Endothelial cell of umbilical vein (primary cell): ENCODE measurements at regions of chr16 and their contacts with region 1.

Region 1: GRCh38 chr16:85768199-85768598 is 17.3 kb upstream of the C16orf74 start:
- DNase-seq: no peak
- H3K4me3 ChIP-seq: no peak overlapping the region
- H3K27ac ChIP-seq: peak overlapping the region; percentile 5
- H3K4me1 ChIP-seq: peaks cover 9% of the 10 kb centered on the region
- H3K27me3 ChIP-seq: no peaks in the 10 kb centered on the region
- CTCF ChIP-seq: no peak
- POLR2A ChIP-seq: no peak

Region 2: GRCh38 chr16:86653285-86654006 is 885.2 kb after region 1 on chr16:
- CTCF ChIA-PET with region 1: no interaction called
- POLR2A ChIA-PET with region 1: interaction called, 10 read pairs
- dilution Hi-C with region 1: no loop called
- intact Hi-C with region 1: no loop called
- DNase-seq: no peak
- H3K4me3 ChIP-seq: no peak overlapping the region
- H3K27ac ChIP-seq: no peak overlapping the region
- H3K4me1 ChIP-seq: no peaks in the 10 kb centered on the region
- H3K27me3 ChIP-seq: no peaks in the 10 kb centered on the region
- CTCF ChIP-seq: no peak
- POLR2A ChIP-seq: no peak